Upper lobe of right lung (tissue), 1 donor: ENCODE measurements at regions of chr20 and their contacts with region 1.

Region 1: DNA sequence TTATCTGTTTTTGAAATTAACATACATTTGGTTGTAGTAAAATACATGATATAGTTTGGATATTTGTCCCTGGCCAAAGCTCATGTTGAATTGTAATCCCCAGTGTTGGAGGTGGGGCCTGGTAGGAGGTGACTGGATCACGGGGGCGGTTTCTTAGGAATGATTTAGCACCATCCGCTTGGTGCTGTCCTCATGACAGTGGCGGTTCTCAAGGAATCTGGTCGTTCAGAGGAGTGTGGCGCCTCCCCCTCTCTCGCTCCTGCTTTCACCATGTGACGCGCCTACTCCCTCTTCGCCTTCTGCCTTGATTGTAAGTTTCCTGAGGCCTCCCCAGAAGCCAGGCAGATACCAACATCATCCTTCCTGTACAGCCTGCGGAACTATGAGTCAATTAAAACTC is 29.0 kb downstream of the CTCFL start:
- DNase-seq: no peak
- ATAC-seq: no peak
- H3K4me3 ChIP-seq: no peak overlapping the region
- H3K27ac ChIP-seq: no peak overlapping the region
- H3K4me1 ChIP-seq: no peaks in the 10 kb centered on the region
- H3K27me3 ChIP-seq: peaks cover 14% of the 10 kb centered on the region
- CTCF ChIP-seq: no peak

Region 2: DNA sequence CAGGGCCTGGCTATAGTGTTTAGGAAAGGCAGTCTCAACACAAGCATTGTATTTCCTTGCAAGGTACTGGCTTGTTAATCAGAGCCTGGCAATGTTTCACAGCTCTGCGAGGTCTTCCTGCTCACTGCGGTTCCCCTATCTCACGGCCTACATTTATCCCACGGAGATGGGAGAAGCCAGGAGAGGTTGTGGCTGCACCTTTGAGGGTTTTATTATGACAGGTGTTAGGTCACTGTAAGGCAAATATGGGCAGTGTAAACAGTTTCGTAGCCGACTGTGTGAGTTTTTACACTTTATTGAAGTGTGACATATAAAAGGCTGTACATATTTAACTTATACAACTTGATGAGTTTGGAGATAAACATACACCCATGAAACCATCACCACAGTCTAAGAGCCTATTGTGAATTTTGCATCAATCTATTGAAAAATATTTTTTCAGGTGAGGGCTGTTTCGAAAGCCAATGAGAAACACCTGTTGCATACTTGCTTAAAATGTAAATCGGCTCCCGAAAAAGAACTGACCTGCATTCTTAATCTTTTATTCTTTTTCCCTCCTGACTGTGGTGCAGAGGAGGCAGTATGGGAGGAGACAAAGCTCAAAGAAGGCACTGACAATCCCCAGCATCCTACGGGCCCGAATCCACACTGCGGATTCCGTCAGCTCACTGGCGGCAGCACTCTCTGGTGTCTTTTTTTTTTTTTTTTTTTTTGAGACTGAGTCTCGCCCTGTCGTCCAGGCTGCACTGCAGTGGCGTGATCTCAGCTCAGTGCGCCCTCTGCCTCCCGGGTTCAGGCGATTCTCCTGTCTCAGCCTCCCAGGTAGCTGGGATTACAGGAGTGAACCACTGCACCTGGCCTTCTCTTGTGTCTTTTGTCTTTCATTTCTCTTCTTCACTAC is 112.3 kb before region 1 on chr20:
- intact Hi-C with region 1: loop called (anchors 2 kb)
- DNase-seq: no peak
- ATAC-seq: no peak
- H3K4me3 ChIP-seq: no peak overlapping the region
- H3K27ac ChIP-seq: no peak overlapping the region
- H3K4me1 ChIP-seq: peaks cover 3% of the 10 kb centered on the region
- H3K27me3 ChIP-seq: no peaks in the 10 kb centered on the region
- CTCF ChIP-seq: no peak

Region 3: GRCh38 chr20:57582432-57583305 is 86.7 kb after region 1 on chr20:
- intact Hi-C with region 1: no loop called
- DNase-seq: no peak
- ATAC-seq: no peak
- H3K4me3 ChIP-seq: no peak overlapping the region
- H3K27ac ChIP-seq: peak overlapping the region; percentile 47
- H3K4me1 ChIP-seq: peaks cover 19% of the 10 kb centered on the region
- H3K27me3 ChIP-seq: peaks cover 34% of the 10 kb centered on the region
- CTCF ChIP-seq: peak; percentile 31

Region 4: DNA sequence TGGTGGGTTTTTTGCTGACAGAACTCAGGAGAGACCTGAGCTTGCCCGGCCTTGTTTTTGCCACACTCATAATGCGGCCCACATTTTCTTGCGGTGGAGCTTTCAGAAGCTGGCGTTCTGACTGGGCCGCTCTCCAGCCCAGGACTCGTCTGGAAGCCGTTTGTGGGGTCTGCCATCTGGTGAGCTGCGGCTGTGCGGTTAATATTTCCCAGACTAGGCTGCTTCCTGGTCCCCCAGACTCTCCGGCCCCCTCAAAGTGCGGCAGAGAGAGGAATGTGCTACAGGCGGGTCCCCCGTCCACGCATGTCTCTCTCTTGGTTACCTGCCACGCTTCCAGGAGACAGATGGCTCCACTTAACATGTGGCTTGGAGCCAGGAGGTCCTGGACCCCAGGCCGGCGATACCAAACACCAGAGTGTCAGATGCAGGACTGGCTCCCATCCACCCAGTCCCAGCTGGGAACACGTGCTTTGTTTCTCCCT is 342.7 kb after region 1 on chr20:
- intact Hi-C with region 1: no loop called
- DNase-seq: no peak
- ATAC-seq: no peak
- H3K4me3 ChIP-seq: no peak overlapping the region
- H3K27ac ChIP-seq: no peak overlapping the region
- H3K4me1 ChIP-seq: no peaks in the 10 kb centered on the region
- H3K27me3 ChIP-seq: no peaks in the 10 kb centered on the region
- CTCF ChIP-seq: no peak

Region 5: DNA sequence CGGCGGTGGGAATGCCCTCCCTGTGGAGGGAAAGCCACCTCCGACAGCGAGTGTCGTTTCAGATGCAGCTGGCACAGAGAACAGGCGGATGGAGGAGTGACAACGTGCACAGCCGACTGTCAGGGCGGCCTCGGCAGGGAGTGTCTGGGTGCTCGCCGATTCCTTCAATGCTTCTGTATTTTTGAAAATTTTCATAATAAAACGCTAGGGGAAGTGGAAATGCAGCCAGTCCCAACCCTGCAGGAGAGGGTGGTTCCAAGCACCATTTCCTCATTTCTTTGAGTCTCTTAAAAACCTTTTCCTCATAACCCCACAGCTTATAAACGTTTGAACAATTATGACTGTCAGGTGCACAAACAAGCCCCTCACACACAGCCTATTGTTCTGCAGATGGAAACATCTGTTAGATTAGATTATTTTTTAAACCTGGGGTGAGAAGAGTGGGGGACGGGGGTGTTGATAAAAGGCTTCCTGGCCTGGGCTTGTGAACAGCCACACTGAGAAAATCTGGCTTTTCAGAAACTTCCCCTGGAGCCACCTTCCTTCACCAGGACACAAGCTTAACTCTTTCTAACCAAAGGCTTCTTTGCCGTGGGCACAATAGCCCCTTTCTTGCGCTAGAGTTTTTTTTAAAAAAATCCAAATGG is 503.6 kb after region 1 on chr20:
- intact Hi-C with region 1: no loop called
- DNase-seq: no peak
- ATAC-seq: peak; percentile 81
- H3K4me3 ChIP-seq: peak overlapping the region; percentile 17
- H3K27ac ChIP-seq: peak overlapping the region; percentile 45
- H3K4me1 ChIP-seq: peaks cover 25% of the 10 kb centered on the region
- H3K27me3 ChIP-seq: no peaks in the 10 kb centered on the region
- CTCF ChIP-seq: no peak